Tibial artery (tissue), 4 donors: ENCODE measurements at regions of chr5 and their contacts with region 1.

Region 1: DNA sequence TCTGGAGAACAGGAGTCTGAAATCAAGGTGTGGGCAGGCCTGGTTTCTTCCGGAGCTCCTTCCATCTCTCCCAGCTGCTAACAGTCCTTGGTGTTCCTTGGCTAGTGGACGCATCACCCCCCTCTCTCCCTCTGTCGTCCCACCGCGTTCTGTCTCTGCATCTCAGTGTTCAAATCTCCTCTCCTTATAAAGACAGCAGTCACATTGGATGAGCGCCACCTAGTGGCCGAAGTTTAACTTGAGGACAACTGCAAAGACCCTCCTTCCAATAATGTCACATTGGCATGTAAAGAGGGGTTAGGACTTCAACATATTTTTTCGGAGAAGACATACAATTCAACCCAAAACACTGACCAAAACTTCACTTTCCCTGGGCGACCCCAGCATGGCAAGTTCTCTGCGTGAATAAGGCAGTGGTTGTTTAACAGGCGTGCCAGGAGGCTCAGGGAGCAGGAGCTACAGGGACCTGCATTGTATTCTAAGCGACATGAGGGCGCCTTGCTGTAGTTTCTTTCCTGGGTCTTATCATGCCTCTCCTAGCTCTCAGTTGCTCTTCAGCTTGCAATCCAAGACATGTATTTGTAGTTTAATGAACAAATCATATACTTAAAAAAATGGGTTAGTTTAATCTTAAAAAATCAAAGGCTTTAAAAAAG is 27.9 kb upstream of the BASP1 start:
- DNase-seq: peak; percentile 77 to 86
- H3K4me3 ChIP-seq: no peak overlapping the region
- H3K27ac ChIP-seq: no peak overlapping the region
- H3K4me1 ChIP-seq: peaks cover 0 to 37% (median 8%) of the 10 kb centered on the region in 4 donors
- H3K27me3 ChIP-seq: no peaks in the 10 kb centered on the region
- CTCF ChIP-seq: peak; percentile 75 to 76

Region 2: DNA sequence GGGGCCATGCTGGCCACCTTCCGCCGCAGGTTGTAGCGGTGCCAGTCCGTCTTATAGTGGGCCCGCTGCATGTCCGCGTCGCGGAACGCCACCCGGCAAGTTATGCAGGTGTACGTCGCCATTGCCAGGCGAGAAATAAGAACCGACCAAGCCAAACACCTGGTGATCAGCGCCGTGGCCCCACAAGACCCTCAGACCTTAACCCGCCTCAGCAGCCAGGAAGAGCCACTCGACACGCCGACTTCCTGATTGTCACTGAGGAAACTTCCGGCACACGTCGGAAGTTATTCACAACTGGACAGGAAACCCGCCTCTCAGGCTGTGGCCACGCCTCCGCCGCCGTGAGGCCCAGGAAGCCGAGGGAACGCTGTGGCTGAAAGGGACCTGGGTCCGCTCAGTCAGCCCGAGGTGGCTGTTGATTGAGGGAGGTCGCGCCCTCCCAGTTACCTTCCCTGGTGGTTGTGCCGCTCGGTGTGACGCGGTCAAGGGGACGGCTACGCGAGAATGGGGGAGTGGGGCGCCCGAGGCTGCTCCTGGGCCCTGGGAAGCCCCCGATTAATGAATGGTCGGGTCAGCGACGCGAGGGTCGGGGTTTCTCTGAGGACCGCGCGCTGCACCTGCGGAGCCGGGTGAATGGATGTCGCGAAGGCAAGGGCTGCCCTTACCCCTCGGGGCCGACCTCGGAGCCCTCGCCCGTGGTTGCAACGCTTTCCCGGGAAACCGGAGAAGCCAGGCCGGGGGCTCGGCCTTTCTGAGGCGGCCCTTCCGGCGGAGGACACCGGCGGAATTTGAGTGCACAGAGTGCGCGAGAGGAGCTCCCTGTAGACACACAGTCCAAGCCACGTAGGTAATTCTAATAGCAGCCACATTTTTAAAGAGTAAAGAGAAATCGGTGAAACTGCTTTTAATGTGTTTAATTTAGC is 723.7 kb before region 1 on chr5 and contains the start of gene ZNF622:
- intact Hi-C with region 1: loop called (anchors 10 kb)
- DNase-seq: peak; percentile 93
- H3K4me3 ChIP-seq: peak within 1 kb of the TSS; percentile 80 to 93
- H3K27ac ChIP-seq: peak within 1 kb of the TSS; percentile 74 to 80
- H3K4me1 ChIP-seq: peaks cover 0 to 59% (median 44%) of the 10 kb centered on the region in 4 donors
- H3K27me3 ChIP-seq: no peaks in the 10 kb centered on the region
- CTCF ChIP-seq: no peak

Region 3: GRCh38 chr5:16690243-16690852 is 499.2 kb before region 1 on chr5:
- intact Hi-C with region 1: loop called (anchors 10 kb)
- DNase-seq: no peak
- H3K4me3 ChIP-seq: no peak overlapping the region
- H3K27ac ChIP-seq: no peak overlapping the region
- H3K4me1 ChIP-seq: peaks cover 0 to 11% (median 5%) of the 10 kb centered on the region in 4 donors
- H3K27me3 ChIP-seq: no peaks in the 10 kb centered on the region
- CTCF ChIP-seq: peak; percentile 25 to 39

Region 4: DNA sequence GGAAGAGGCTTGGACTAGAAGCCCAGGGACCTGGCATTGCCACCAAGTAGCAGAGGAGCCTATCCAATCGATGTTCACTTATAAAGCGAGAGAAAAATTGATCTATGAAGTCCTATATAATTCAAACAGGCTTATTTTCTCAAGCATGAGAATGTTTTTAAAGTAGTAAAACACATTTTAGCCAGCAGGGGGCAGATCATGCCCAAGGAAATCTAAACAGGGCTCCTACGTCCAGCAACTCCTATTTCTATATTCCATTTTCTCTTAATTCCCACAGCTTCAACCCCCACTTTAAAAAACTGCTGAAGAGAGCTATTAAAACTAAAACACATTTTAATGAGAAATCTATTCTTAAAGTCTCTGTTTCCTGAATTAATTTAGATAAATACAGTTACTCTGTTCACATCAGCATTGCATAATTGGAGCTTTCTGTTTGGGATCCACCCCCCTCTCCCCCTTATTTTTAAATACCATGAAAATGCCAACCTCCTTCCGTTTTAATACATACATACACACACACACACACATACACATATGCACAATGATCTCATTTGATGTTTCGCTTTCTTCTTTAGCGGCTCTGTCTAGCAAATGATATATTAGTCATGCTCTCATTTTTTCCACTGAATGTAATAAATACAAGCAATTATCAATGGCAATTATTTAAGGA is 398.3 kb before region 1 on chr5:
- intact Hi-C with region 1: loop called (anchors 2 kb)
- DNase-seq: no peak
- H3K4me3 ChIP-seq: no peak overlapping the region
- H3K27ac ChIP-seq: no peak overlapping the region
- H3K4me1 ChIP-seq: peaks cover 0 to 6% (median 2%) of the 10 kb centered on the region in 4 donors
- H3K27me3 ChIP-seq: no peaks in the 10 kb centered on the region
- CTCF ChIP-seq: peak; percentile 70 to 79

Region 5: DNA sequence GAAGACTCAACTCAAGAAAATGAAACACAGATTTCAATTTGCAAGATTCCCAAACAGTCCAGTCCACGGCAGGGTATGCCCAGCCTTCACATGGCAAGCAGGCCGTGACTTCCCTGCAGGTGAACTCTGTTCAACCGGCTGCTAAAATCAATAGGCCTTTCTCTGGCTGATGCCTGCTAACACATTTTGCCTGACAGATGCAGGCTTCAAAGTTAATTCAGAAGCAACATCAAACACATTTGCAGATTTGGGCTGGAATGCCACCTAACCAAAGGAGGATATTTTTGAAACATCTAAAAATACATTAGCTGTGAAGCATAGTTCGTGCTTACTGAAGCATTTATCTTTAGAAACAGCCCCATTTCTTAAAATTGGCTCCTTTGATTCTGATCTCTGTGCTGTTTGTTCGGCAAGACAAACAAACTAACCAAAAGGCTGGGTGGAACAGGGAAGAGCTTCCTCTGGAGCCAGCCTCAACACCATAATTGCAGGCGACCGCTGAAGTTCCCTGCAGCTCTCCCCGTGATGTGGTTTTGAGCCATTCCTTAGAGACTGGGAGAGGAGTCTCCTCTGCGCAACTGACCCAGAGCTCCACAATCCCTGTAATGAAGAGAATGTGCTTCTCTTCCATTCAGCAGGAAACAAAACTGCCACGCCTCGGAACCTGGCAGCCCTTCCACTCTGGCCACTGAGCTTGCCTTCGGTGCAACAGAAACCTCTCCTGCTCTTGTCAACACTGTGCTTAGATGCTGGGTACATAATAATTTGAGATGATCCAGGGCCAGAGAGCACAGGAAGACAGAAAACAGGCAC is 379.9 kb before region 1 on chr5:
- intact Hi-C with region 1: loop called (anchors 5 kb)
- DNase-seq: peak in 1 of 2 donors; percentile 26
- H3K4me3 ChIP-seq: no peak overlapping the region
- H3K27ac ChIP-seq: peak overlapping the region; percentile 41 to 44
- H3K4me1 ChIP-seq: peaks cover 0 to 35% (median 17%) of the 10 kb centered on the region in 4 donors
- H3K27me3 ChIP-seq: no peaks in the 10 kb centered on the region
- CTCF ChIP-seq: no peak

Region 6: GRCh38 chr5:16934123-16934522 is 255.4 kb before region 1 on chr5:
- intact Hi-C with region 1: loop called (anchors 5 kb)
- DNase-seq: peak; percentile 37 to 72
- H3K4me3 ChIP-seq: peak overlapping the region; percentile 75 to 92
- H3K27ac ChIP-seq: no peak overlapping the region
- H3K4me1 ChIP-seq: peaks cover 0 to 33% (median 17%) of the 10 kb centered on the region in 4 donors
- H3K27me3 ChIP-seq: no peaks in the 10 kb centered on the region
- CTCF ChIP-seq: peak; percentile 69 to 81

Region 7: DNA sequence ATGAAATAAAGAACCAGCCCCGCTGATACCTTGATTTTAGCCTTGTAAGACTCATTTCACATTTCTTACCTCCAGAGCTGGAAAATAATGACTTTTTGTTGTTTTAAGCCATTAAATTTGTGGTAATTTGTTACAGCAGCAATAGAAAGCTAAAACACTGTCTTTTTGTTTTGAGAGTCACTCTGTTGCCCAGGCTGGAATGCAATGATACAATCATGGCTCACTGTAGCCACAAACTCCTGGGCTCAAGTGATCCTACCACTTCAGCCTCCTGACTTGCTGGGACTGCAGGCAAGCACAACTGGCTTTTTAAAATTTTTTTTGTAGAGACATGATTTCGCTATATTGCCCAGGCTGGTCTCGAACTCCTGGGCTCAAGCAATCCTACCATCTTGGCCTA is 218.7 kb before region 1 on chr5:
- intact Hi-C with region 1: no loop called
- DNase-seq: no peak
- H3K4me3 ChIP-seq: no peak overlapping the region
- H3K27ac ChIP-seq: no peak overlapping the region
- H3K4me1 ChIP-seq: no peaks in the 10 kb centered on the region
- H3K27me3 ChIP-seq: no peaks in the 10 kb centered on the region
- CTCF ChIP-seq: no peak

Region 8: GRCh38 chr5:17132444-17133083 is 56.9 kb before region 1 on chr5:
- intact Hi-C with region 1: loop called (anchors 10 kb)
- DNase-seq: no peak
- H3K4me3 ChIP-seq: no peak overlapping the region
- H3K27ac ChIP-seq: no peak overlapping the region
- H3K4me1 ChIP-seq: peaks cover 0 to 26% (median 3%) of the 10 kb centered on the region in 4 donors
- H3K27me3 ChIP-seq: no peaks in the 10 kb centered on the region
- CTCF ChIP-seq: peak; percentile 64 to 69

Region 9: DNA sequence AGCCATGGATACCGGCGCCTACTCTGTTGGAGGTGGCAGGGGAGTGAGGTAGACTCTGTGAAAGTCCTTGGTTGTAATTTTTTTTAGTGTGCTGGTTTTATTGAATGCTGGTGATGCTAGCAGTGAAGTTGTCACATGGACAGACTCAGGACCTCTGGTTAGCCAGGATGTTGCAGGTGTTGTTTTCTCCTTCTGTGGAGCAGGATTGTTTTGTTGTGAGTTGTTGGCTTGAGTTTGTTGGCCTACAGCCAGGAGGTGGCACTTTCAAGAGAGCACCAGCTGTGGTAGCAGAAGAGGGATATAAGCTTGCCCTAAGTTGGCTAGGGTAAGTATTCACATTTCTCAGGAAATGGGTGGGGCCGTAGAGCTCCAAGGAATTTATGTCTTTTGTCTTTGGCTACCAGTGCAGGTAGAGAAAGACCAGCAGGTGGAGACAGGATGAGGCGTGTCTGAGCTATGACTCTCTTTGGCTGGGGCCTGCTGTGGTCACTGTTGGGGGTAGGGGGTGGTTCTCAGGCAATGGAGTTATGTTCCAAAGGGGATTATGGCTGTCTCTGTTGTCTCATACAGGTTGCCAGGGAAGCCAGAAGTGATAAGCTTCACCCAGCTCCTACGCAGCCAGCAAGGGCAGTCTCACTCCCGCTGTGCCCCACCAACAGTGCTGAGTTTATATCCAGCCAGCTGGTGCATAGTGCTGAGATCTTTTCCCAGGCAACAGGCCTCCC is 693.4 kb after region 1 on chr5:
- intact Hi-C with region 1: no loop called
- DNase-seq: no peak
- H3K4me3 ChIP-seq: no peak overlapping the region
- H3K27ac ChIP-seq: no peak overlapping the region
- H3K4me1 ChIP-seq: no peaks in the 10 kb centered on the region
- H3K27me3 ChIP-seq: no peaks in the 10 kb centered on the region
- CTCF ChIP-seq: no peak